HepG2 (cell line): ENCODE measurements at regions of chr18 and their contacts with region 1.

Region 1: GRCh38 chr18:10912790-10913545 is 236.4 kb downstream of the PIEZO2 start:
- DNase-seq: peak; percentile 86
- ATAC-seq: peak; percentile 39
- H3K4me3 ChIP-seq: no peak overlapping the region
- H3K27ac ChIP-seq: peak overlapping the region; percentile 75
- H3K4me1 ChIP-seq: peaks cover 85% of the 10 kb centered on the region
- H3K27me3 ChIP-seq: no peaks in the 10 kb centered on the region
- CTCF ChIP-seq: no peak
- EP300 ChIP-seq: peak in 1 of 2 experiments; percentile 61; a peak in 2 of 4 replicates
- POLR2A ChIP-seq: no peak
- RAD21 ChIP-seq: no peak

Region 2: DNA sequence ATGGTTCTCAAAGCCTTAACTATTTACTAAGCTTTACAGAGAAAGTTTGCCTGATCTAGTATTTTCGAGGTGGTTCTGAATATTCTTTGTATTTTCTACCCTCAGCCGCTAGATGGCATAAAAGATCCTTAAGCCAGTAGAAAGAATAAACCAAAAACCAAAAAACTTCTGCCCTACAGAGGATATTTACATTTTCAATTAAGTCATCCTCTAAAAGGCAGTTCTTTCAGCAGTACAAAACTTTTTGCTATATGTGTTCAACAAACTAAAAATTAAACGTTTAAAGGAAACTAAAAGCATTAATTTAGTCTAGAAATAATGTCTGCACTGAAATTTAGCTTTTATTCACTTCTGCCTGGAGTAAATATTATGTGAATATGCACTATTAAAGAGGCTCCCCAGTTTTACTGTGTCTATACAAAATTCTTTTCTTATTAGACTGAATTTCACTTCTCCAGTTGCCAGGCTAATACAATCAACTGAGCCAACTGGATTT is 61.1 kb before region 1 on chr18:
- CTCF ChIA-PET with region 1: no interaction called
- POLR2A ChIA-PET with region 1: no interaction called
- in situ Hi-C with region 1: loop called (anchors 10 kb)
- intact Hi-C with region 1: no loop called
- DNase-seq: peak; percentile 57
- ATAC-seq: no peak
- H3K4me3 ChIP-seq: no peak overlapping the region
- H3K27ac ChIP-seq: no peak overlapping the region
- H3K4me1 ChIP-seq: peaks cover 28% of the 10 kb centered on the region
- H3K27me3 ChIP-seq: no peaks in the 10 kb centered on the region; a peak in 1 of 5 replicates
- CTCF ChIP-seq: peak; percentile 72
- EP300 ChIP-seq: no peak
- POLR2A ChIP-seq: no peak
- RAD21 ChIP-seq: peak; percentile 83

Region 3: DNA sequence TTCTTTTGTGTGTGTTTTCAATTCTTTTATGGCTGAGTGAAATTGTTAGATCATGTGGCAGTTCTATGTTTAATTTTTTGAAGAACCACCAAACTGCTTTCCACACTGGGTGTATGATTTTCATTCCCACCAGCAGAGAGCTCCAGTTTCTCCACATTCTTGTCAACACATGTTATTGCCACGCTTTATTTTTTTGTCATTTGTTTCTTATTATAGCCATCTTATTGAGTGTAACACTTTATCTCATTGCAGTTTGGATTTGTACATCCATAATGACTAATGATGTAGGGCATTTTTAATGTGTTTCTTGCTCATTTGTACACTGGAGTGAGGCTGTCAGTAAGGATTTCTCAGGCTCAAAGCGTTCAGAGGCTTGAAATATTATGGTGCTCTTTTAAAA is 52.2 kb after region 1 on chr18:
- CTCF ChIA-PET with region 1: no interaction called
- POLR2A ChIA-PET with region 1: no interaction called
- in situ Hi-C with region 1: no loop called
- intact Hi-C with region 1: no loop called
- DNase-seq: no peak
- ATAC-seq: no peak
- H3K4me3 ChIP-seq: no peak overlapping the region
- H3K27ac ChIP-seq: no peak overlapping the region
- H3K4me1 ChIP-seq: no peaks in the 10 kb centered on the region
- H3K27me3 ChIP-seq: no peaks in the 10 kb centered on the region
- CTCF ChIP-seq: no peak
- EP300 ChIP-seq: no peak
- POLR2A ChIP-seq: no peak
- RAD21 ChIP-seq: no peak